BJ (cell line): ENCODE measurements at regions of chr18 and their contacts with region 1.

Region 1: DNA sequence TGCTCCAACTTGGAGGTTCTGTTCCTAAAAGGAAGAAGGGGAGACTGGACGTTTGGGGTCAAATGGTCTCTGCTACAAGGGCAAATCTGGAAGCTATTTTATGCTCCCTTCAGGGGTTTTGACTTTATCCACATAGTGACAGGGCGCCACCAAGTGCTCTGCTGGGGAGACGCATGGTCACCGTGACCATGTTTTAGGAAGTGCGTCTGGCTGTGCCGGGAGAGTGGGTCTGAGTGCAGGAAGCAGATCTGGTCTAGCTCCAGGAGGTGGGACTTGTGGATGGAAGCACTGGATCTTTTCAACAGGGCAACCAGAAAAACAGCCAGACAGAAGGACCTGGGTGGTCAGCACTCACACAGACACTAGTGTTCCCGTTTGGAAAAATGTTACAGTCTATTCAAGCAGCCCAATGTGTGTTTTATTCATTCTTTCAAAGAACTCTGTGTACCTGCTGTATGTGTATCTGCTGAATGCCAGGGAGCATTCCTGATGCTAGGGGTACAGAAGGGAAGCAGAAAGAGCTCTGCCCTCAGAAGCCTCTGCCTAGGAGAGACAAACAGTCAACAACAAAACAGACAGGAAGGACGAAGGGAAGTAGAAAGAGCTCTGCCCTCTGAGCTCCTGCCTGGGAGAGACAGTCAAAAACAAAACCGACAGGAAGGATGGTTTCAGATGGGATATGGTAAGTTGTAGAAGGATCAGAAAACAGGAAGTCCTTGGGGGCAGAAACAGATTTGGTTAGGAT is 14.3 kb downstream of the IMPA2 start:
- DNase-seq: no peak
- H3K4me3 ChIP-seq: no peak overlapping the region
- H3K27me3 ChIP-seq: no peaks in the 10 kb centered on the region
- CTCF ChIP-seq: peak; percentile 89

Region 2: DNA sequence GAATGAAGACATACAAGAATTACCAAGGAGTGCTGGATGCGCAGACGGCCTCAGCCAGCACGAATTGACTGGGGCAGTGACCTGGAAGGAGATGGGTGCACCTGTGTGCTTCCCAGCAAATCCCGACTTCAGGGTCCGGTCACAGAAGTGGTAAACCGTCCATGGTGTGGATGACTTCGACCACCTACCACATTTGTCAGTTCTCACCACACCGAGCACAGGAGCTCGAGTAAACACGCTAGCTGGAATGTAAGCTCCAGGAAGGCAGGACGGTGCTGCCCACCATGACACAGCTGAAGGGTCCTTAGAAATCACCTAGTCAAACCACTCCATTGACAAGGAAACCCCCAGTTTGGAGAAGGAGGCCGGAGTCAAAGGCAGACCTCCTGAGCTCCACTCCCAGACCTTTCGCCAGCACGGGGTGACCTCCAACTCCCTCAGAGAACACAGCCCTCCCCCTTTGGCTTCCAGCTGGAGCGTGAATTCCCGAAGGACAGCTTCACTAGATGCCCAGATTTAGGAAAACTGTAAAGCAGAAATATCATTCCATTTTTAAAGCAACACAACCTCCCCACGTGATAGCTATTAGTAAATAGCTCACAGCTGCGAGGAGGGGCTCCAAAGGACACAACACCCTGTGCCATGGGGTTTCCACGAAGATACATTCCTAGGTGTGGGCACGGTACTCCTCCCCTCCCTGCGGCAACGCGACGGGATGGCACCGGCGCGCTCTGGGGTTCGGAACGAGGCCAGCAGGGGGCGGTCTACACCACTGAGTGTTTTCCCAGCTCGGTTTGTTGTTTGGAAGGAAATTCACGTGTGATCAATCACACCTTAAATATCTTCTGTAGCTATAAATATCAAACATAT is 340.6 kb before region 1 on chr18:
- CTCF ChIA-PET with region 1: interaction called, 12 read pairs
- POLR2A ChIA-PET with region 1: no interaction called
- DNase-seq: no peak
- H3K4me3 ChIP-seq: no peak overlapping the region
- H3K27me3 ChIP-seq: peaks cover 3% of the 10 kb centered on the region; the same call in 1 of the 2 replicates
- CTCF ChIP-seq: peak; percentile 77

Region 3: DNA sequence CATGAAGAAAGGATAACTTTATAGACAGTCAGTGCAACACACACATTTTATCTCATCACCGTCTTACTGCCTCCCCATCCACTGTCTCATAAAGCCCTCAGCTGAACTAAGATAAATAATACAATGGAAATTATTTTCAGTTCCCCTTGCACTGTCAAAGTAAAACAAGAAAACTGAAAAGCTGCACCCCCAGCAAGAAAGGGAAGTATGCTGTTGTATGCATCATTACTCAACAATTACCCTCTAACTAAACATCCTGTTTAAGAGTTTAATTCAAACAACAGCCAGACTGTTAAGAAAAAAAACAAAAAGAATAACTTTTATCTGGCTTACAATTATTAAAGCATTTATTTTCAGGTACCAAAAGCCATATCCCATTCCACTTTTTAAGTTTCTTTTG is 112.5 kb before region 1 on chr18:
- CTCF ChIA-PET with region 1: no interaction called
- POLR2A ChIA-PET with region 1: no interaction called
- DNase-seq: no peak
- H3K4me3 ChIP-seq: no peak overlapping the region
- H3K27me3 ChIP-seq: no peaks in the 10 kb centered on the region
- CTCF ChIP-seq: no peak

Region 4: GRCh38 chr18:11925800-11926481 is 69.7 kb before region 1 on chr18:
- CTCF ChIA-PET with region 1: interaction called, 372 read pairs
- POLR2A ChIA-PET with region 1: no interaction called
- DNase-seq: no peak
- H3K4me3 ChIP-seq: no peak overlapping the region
- H3K27me3 ChIP-seq: peaks cover 2% of the 10 kb centered on the region; the same call in 1 of the 2 replicates
- CTCF ChIP-seq: no peak

Region 5: GRCh38 chr18:11947214-11948191 is 48.1 kb before region 1 on chr18:
- CTCF ChIA-PET with region 1: interaction called, 372 read pairs
- POLR2A ChIA-PET with region 1: no interaction called
- DNase-seq: peak; percentile 80
- H3K4me3 ChIP-seq: peak overlapping the region; percentile 30
- H3K27me3 ChIP-seq: no peaks in the 10 kb centered on the region
- CTCF ChIP-seq: no peak

Region 6: DNA sequence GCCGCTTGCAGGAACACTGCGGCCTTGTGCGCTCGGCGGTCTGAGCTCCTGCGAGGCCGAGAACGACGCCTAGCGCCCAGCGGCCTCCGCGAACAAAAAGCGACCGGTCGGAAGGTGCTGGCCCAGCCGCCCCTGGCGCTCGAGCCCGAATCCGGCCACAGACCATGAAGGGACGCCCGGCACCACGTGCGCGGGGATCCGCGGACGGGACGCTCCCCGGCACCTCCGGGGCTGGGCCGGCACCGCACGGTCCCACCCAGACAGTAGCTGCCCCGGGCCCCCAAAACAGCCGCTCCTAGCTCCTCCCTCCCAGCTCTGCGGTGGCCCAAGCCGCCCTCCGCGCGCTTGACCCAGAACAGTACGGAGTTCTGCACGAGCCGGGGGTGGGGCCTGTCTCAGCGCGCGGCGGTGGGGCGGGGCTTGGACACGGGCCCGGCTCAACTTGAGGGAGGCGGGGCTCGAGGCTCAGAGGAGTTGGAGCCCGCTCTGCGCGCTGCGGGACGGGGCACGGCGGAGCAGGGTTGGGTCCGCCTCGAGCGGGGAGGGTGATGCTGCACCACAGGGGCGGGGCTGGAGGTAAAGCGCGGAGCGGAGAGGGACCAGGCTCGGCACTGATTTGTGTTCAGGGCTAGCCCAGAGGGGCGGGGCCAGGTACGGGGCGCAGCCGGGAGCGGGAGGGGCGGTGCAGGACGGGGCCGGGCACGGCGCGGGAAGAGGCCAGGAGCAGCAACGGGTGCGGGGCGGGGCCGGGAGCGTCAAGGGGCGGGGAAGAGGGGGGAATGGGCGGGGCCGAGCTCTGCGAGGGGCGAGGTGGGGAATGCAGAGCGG is 14.8 kb before region 1 on chr18:
- CTCF ChIA-PET with region 1: interaction called, 17 read pairs
- POLR2A ChIA-PET with region 1: interaction called, 3 read pairs
- DNase-seq: peak; percentile 92
- H3K4me3 ChIP-seq: peak overlapping the region; percentile 82
- H3K27me3 ChIP-seq: no peaks in the 10 kb centered on the region
- CTCF ChIP-seq: peak; percentile 36; the same call in 1 of the 2 replicates

Region 7: DNA sequence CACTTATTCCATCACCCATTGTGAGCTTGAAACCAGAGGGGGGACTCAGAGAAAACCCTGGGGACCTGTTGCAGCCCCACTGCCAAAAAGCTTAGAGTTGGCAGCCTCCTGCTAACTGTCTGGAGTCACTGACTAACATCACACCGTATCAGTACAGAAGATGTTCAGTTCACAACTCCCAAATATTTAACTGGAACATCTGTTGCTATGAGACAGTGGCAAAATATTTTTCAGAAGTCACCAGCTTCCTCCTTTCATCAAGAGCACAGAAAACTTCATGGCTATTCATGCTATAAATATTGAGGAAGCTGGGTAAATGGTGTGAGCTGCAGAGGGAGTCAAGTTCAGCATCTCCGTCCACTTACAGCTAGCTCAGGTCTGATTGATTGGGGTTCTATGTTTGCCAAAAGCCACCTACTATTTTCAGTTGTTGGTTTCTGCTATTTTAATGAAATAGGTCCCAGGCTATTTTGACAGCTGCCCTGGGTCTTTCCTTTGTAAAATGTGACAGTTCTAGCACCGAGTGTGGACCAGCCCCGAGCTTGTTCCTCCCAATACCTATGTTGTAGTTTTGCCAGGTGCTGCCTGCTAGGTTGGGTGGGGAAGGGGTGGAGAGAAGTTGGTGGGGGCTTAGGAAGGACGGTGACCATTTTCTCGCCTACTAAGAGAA is 322.2 kb after region 1 on chr18:
- CTCF ChIA-PET with region 1: no interaction called
- POLR2A ChIA-PET with region 1: no interaction called
- DNase-seq: peak; percentile 64
- H3K4me3 ChIP-seq: no peak overlapping the region
- H3K27me3 ChIP-seq: no peaks in the 10 kb centered on the region
- CTCF ChIP-seq: no peak